ENCODE measurements at regions of chr5 and their contacts with region 1.

Region 1: DNA sequence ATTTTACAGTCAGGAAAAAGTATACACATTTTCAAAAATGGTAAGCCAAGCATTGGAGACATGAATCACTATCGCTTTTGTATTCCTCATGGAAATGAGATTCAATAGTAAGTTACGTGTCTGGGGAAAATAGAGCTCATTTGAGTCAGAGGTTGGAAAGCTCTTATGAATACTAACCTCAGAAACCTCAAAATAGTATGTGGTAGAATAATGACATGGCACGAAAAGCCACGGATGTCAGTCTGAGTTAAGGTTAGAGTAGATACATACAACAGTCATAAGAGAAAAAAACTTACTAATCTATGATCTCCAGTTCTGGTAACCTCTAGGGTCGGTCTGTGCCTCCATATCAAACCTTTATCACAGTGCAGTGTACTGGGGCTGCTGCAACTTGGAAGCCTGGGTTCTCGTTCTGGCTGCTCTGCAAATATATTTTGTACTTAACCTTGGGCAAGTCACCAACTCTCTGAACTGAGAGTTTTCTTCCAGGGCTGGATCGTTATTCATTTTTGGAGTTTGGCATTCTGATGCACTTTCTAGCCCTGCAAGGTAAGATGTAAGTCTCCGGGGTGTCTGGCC is 31.8 kb downstream of the MAP1B start:
- DNase-seq: no peak
- ATAC-seq: peak in 2 of 4 donors; percentile 18 to 34
- H3K4me3 ChIP-seq: no peak overlapping the region
- H3K27ac ChIP-seq: peak overlapping the region in 8 of 12 donors; percentile 2 to 31 (median 14)
- H3K4me1 ChIP-seq: peaks cover 0 to 84% (median 23%) of the 10 kb centered on the region in 12 donors
- H3K27me3 ChIP-seq: no peaks in the 10 kb centered on the region
- CTCF ChIP-seq: no peak
- POLR2A ChIP-seq: no peak

Region 2: GRCh38 chr5:72015103-72015548 is 123.9 kb before region 1 on chr5:
- intact Hi-C with region 1: no loop called
- DNase-seq: peak; percentile 31 to 79 (median 48)
- ATAC-seq: peak; percentile 15 to 89 (median 79)
- H3K4me3 ChIP-seq: no peak overlapping the region
- H3K27ac ChIP-seq: no peak overlapping the region
- H3K4me1 ChIP-seq: peaks cover 0 to 8% (median 0%) of the 10 kb centered on the region in 12 donors
- H3K27me3 ChIP-seq: no peaks in the 10 kb centered on the region
- CTCF ChIP-seq: no peak
- POLR2A ChIP-seq: no peak

Region 3: DNA sequence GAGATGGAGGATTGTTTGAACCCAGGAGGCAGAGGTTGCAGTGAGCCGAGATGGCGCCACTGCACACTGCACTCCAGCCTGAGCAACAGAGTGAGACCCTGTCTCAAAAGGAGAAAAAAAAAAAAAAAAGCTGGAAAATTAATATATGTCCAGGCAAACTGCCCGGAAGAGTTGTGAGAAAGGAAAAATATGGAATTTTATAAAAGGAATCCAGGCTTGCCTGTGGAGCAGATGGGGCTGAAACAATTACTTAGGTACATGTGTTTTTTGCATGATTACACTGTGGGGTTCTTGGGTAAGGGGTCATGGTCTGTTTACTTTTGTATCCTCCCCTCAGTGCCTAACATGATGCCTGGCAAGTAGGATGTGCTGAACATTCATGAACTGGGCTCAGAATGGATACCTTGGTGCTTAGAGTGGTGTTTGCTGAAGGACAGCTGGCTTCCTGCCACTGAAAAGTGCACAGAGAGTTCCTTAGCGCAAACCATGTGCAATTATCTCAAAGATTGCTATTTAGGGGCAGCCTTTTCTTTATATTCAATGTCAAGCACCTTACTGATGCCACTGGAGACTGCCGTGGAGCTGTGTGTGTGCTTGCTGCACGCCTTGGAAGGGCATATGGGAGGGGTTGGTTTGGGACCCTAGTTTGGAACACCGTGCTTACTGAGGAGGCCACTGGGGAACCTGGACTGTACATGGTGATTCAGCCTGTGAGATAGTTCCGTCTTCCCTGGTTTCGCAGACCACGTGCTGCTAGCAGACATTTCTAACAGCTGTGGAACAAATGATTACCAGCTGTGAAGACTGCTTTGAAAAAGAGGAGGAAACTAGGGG is 46.7 kb after region 1 on chr5:
- intact Hi-C with region 1: loop called in 1 of 10 experiments (anchors 10 kb)
- DNase-seq: peak in 2 of 5 donors; percentile 50 to 51
- ATAC-seq: peak; percentile 69 to 88 (median 80)
- H3K4me3 ChIP-seq: no peak overlapping the region
- H3K27ac ChIP-seq: peak overlapping the region in 2 of 12 donors; percentile 10 to 35
- H3K4me1 ChIP-seq: peaks cover 0 to 34% (median 14%) of the 10 kb centered on the region in 12 donors
- H3K27me3 ChIP-seq: no peaks in the 10 kb centered on the region
- CTCF ChIP-seq: no peak
- POLR2A ChIP-seq: no peak

Region 4: GRCh38 chr5:72244862-72245371 is 105.9 kb after region 1 on chr5:
- intact Hi-C with region 1: loop called in 3 of 10 experiments (anchors 5 to 10 kb)
- DNase-seq: peak in 1 of 5 donors; percentile 22
- ATAC-seq: peak; percentile 81 to 85 (median 84)
- H3K4me3 ChIP-seq: no peak overlapping the region
- H3K27ac ChIP-seq: peak overlapping the region in 11 of 12 donors; percentile 25 to 71 (median 55)
- H3K4me1 ChIP-seq: peaks cover 7 to 56% (median 47%) of the 10 kb centered on the region in 12 donors
- H3K27me3 ChIP-seq: no peaks in the 10 kb centered on the region
- CTCF ChIP-seq: peak in 10 of 12 donors; percentile 14 to 50 (median 39)
- POLR2A ChIP-seq: no peak

Region 5: DNA sequence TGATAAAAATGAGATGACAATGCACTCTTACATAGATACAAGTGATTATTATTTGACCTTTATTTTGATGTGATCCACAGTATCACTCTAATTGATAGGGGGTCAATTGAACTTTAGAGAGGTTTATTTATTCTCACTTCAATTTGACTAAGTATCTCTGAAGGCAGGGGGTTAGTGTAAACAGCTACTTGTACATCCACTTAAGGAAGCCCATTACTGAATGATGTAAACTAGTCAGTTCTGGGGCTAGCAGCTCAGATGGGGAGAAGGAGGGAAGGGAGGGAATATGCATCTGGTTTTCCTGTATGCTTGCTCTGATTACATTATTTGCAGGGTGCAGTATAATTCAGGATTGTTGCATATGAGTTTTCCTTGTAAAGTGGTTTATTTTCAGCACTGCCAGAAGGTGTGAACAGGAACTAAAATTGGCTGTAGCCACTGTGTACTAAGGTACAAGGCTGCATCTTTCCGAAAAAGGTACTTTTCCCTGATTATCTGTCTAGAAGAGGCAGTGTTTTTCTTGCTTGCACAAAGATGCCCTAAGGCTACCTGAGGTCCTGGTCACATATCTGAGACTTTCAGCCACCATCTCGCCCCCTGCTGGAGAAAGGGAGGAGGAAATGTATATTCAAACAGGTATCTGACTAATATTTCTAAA is 129.8 kb after region 1 on chr5:
- intact Hi-C with region 1: loop called in 2 of 10 experiments (anchors 5 to 10 kb)
- DNase-seq: peak in 4 of 5 donors; percentile 18 to 30 (median 24)
- ATAC-seq: peak in 1 of 4 donors; percentile 22
- H3K4me3 ChIP-seq: no peak overlapping the region
- H3K27ac ChIP-seq: no peak overlapping the region
- H3K4me1 ChIP-seq: peaks cover 0 to 35% (median 3%) of the 10 kb centered on the region in 12 donors
- H3K27me3 ChIP-seq: no peaks in the 10 kb centered on the region
- CTCF ChIP-seq: peak; percentile 41 to 72 (median 63)
- POLR2A ChIP-seq: no peak

Region 6: GRCh38 chr5:72307968-72308852 is 169.2 kb after region 1 on chr5:
- intact Hi-C with region 1: loop called in 7 of 10 experiments (anchors 2 to 10 kb)
- DNase-seq: peak; percentile 97 to 99 (median 99)
- ATAC-seq: peak; percentile 99
- H3K4me3 ChIP-seq: peak overlapping the region; percentile 55 to 87 (median 70)
- H3K27ac ChIP-seq: peak overlapping the region; percentile 81 to 99 (median 94)
- H3K4me1 ChIP-seq: peaks cover 0 to 32% (median 7%) of the 10 kb centered on the region in 12 donors
- H3K27me3 ChIP-seq: no peaks in the 10 kb centered on the region
- CTCF ChIP-seq: peak; percentile 86 to 97 (median 93)
- POLR2A ChIP-seq: peak; percentile 83 to 98

Region 7: DNA sequence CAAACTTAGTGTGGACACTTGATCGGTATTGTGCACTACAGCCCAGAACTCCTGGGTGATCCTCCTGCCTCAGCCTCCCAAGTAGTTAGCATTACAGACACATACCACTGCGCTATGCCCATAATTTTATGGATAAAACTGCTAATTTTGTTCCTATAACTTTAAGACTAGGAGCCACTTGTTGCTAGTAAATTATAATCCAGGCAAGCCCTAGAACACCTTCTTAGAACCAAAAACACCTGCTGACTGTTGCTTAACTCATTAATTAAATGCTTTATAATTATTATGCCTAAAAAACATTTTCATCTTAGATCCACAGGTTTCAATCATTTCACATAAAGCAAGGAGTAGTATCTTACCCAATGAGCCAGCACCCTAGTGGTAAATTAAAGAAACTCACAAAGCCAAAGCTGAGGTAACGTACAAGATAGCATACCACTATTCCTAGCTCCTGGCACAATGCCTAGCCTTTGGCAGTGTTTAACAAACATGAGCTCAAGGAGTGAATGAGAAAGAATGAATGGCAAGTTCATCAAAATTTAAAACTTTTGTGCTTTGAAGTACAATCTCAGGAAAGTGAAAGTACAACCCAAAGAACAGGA is 175.6 kb after region 1 on chr5:
- intact Hi-C with region 1: loop called in 8 of 10 experiments (anchors 2 to 10 kb)
- DNase-seq: peak in 4 of 5 donors; percentile 60 to 68 (median 64)
- ATAC-seq: peak; percentile 57 to 88 (median 78)
- H3K4me3 ChIP-seq: no peak overlapping the region
- H3K27ac ChIP-seq: no peak overlapping the region
- H3K4me1 ChIP-seq: peaks cover 0 to 29% (median 19%) of the 10 kb centered on the region in 12 donors
- H3K27me3 ChIP-seq: no peaks in the 10 kb centered on the region
- CTCF ChIP-seq: peak in 6 of 12 donors; percentile 23 to 38 (median 30)
- POLR2A ChIP-seq: no peak

Measured in heart left ventricle (tissue), 16 donors.